ENCODE measurements at regions of chr3 and their contacts with region 1.

Region 1: DNA sequence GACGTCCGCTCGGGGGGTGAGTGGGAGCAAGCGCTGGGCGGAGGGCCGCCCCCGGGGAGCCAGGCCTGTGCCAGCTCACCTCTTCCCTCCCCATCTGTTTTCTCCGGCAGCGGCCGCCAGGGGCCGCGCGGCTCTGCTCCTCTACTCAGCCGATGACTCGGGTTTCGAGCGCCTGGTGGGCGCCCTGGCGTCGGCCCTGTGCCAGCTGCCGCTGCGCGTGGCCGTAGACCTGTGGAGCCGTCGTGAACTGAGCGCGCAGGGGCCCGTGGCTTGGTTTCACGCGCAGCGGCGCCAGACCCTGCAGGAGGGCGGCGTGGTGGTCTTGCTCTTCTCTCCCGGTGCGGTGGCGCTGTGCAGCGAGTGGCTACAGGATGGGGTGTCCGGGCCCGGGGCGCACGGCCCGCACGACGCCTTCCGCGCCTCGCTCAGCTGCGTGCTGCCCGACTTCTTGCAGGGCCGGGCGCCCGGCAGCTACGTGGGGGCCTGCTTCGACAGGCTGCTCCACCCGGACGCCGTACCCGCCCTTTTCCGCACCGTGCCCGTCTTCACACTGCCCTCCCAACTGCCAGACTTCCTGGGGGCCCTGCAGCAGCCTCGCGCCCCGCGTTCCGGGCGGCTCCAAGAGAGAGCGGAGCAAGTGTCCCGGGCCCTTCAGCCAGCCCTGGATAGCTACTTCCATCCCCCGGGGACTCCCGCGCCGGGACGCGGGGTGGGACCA is 632 bp upstream of the CRELD1 start:
- DNase-seq: peak; percentile 90
- ATAC-seq: peak; percentile 82
- H3K4me3 Mint-ChIP-seq: peak overlapping the region; percentile 98
- H3K27ac Mint-ChIP-seq: peak overlapping the region; percentile 97
- H3K4me1 Mint-ChIP-seq: peaks cover 32% of the 10 kb centered on the region
- H3K27me3 Mint-ChIP-seq: no peaks in the 10 kb centered on the region

Region 2: GRCh38 chr3:9809615-9810432 is 123.2 kb before region 1 on chr3 and contains the start of gene TTLL3:
- CTCF ChIA-PET with region 1: interaction called, 15 read pairs
- POLR2A ChIA-PET with region 1: interaction called, 3 read pairs
- DNase-seq: peak; percentile 54
- ATAC-seq: peak; percentile 73
- H3K4me3 Mint-ChIP-seq: peak within 1 kb of the TSS; percentile 80
- H3K27ac Mint-ChIP-seq: peak within 1 kb of the TSS; percentile 88
- H3K4me1 Mint-ChIP-seq: peaks cover 48% of the 10 kb centered on the region
- H3K27me3 Mint-ChIP-seq: no peaks in the 10 kb centered on the region
- total RNA-seq, gene TTLL3: 53.7 to 55.2 TPM

Region 3: GRCh38 chr3:9902372-9903237 is 30.4 kb before region 1 on chr3 and contains the start of gene IL17RE:
- CTCF ChIA-PET with region 1: interaction called, 17 read pairs
- POLR2A ChIA-PET with region 1: interaction called, 4 read pairs
- DNase-seq: peak; percentile 38
- ATAC-seq: peak; percentile 77
- H3K4me3 Mint-ChIP-seq: peak within 1 kb of the TSS; percentile 30
- H3K27ac Mint-ChIP-seq: peak within 1 kb of the TSS; percentile 83
- H3K4me1 Mint-ChIP-seq: peaks cover 35% of the 10 kb centered on the region
- H3K27me3 Mint-ChIP-seq: no peaks in the 10 kb centered on the region
- total RNA-seq, gene IL17RE: 1.3 to 1.8 TPM

Region 4: DNA sequence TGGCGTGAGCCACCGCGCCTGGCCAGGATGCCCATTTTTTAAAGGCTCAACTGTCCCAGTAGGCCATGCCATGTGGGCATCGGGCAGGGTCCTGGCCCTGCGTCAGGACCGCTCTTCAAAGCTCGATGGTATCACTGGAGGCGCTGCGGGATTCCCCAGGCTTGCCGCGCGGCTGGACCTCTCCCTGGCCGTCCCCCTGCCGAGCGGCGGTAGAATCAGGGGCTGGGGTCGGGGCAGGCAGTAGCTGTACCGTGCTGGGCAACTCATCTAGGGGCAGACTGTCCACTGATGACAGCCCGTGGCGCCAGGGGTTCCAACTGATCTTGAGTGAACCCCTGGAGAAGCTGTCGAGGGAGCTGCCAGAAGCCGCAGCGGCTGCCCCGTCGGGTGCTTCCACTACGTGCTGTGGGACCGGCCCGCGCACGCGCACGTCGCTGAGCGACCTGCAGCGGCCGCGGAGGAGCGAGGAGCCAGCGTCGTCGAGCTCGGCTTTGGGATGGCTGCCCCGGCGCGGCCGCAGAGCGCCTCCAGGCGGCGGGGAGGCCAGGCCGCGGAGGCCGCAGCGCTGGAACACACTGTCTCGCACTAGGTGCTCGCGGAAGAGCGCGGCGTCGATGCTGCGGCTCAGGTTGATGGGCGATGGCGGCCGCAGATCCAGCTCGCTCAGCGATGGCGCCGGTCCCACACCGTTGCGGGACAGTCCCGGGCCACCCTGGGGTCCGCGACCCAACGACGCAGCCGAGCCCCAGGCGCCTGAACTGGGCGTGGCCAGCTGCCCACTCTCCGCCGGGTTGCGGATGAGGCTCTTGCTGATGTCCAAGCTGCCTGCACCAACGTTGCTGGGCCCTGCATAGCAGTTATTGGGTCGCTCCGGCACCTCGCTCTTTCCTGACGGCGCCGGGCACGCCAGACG is 13.4 kb after region 1 on chr3:
- CTCF ChIA-PET with region 1: interaction called, 46 read pairs
- POLR2A ChIA-PET with region 1: interaction called, 10 read pairs
- DNase-seq: peak; percentile 81
- ATAC-seq: peak; percentile 90
- H3K4me3 Mint-ChIP-seq: peak overlapping the region; percentile 76
- H3K27ac Mint-ChIP-seq: peak overlapping the region; percentile 78
- H3K4me1 Mint-ChIP-seq: peaks cover 12% of the 10 kb centered on the region
- H3K27me3 Mint-ChIP-seq: no peaks in the 10 kb centered on the region

Region 5: DNA sequence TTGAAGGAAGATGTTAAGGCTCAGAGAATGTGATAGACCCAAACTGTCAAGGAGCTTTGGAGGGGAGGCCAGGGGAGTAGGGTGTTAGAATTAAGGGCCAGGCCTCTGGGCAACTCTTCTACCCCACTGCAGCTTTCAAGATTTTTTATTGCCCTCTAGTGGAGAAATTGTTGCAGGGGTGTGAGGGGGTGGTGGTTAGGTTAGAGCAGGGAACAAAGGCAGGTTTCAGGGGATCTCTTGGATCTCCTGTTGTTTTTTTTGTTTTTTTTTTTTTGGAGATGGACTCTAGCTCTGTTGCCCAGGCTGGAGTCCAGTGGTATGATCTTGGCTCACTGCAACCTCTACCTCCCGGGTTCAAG is 389.3 kb after region 1 on chr3:
- CTCF ChIA-PET with region 1: interaction called, 21 read pairs
- POLR2A ChIA-PET with region 1: interaction called, 3 read pairs
- DNase-seq: peak; percentile 48
- ATAC-seq: no peak
- H3K4me3 Mint-ChIP-seq: no peak overlapping the region
- H3K27ac Mint-ChIP-seq: peak overlapping the region; percentile 39
- H3K4me1 Mint-ChIP-seq: peaks cover 21% of the 10 kb centered on the region
- H3K27me3 Mint-ChIP-seq: peaks cover 16% of the 10 kb centered on the region